ENCODE measurements at regions of chr1 and their contacts with region 1.

Region 1: GRCh38 chr1:91511386-91511785 is 10.7 kb downstream of the CDC7 start:
- DNase-seq: peak; percentile 59
- H3K4me3 Mint-ChIP-seq: no peak overlapping the region
- H3K27ac Mint-ChIP-seq: no peak overlapping the region
- H3K4me1 Mint-ChIP-seq: peaks cover 23% of the 10 kb centered on the region
- H3K27me3 Mint-ChIP-seq: no peaks in the 10 kb centered on the region

Region 2: GRCh38 chr1:91924146-91924545 is 412.8 kb after region 1 on chr1:
- intact Hi-C with region 1: loop called (anchors 1 kb)
- DNase-seq: no peak
- H3K4me3 Mint-ChIP-seq: no peak overlapping the region
- H3K27ac Mint-ChIP-seq: peak overlapping the region; percentile 6
- H3K4me1 Mint-ChIP-seq: peaks cover 7% of the 10 kb centered on the region
- H3K27me3 Mint-ChIP-seq: peaks cover 10% of the 10 kb centered on the region